Dorsolateral prefrontal cortex (tissue), 120 donors: ENCODE measurements at regions of chr14 and their contacts with region 1.

Region 1: GRCh38 chr14:22986508-22987054 is 4.2 kb upstream of the AJUBA start:
- DNase-seq: peak; percentile 83 to 98 (median 90)
- H3K4me3 ChIP-seq: no peak overlapping the region
- H3K27ac ChIP-seq: no peak overlapping the region
- H3K27me3 ChIP-seq: peaks cover 0 to 14% (median 9%) of the 10 kb centered on the region in 45 donors
- CTCF ChIP-seq: peak; percentile 77 to 99 (median 96)

Region 2: DNA sequence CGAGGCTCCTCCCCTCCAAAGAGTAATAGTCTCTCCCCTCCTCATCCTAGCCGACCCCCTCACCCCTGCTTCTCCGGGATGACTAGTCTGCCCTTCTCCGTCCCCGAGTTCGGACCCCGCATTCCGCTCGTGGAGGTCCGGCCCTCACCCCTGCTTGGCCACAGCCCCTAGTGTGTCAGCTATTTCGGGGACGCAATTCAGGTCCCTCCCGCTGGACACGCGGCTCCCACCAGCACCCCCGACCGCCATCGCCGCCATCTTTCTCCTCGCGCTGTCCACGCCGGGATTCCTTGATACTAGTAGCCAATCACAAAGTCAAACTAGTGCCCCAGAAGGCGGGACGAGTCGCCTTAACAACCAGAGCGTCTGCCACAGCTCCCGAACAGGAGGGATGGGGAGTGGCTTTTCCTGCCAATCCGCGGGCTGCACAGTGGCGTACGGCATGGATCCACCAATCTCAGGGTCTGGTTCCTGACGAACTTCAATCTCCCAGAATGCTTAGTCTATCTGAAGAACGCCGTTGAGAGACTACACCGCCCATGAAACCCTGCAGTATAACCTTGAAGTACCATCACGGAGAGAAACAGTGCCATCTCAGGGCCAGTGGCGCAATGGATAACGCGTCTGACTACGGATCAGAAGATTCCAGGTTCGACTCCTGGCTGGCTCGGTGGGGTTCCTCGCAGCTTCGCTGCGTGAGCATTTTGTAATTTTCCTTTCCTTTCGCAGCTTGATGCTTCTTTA is 57.3 kb before region 1 on chr14 and contains the start of gene PRMT5:
- intact Hi-C with region 1: loop called (anchors 5 to 10 kb)
- DNase-seq: peak; percentile 89 to 100 (median 99)
- H3K4me3 ChIP-seq: peak within 1 kb of the TSS; percentile 59 to 97 (median 86)
- H3K27ac ChIP-seq: peak within 1 kb of the TSS; percentile 68 to 97 (median 92)
- H3K27me3 ChIP-seq: no peaks in the 10 kb centered on the region
- CTCF ChIP-seq: peak in 28 of 56 donors; percentile 9 to 53 (median 31)
- total RNA-seq, gene PRMT5: 35.6 to 70.9 (median 49.6) TPM